ENCODE measurements at regions of chr13 and their contacts with region 1.

Region 1: DNA sequence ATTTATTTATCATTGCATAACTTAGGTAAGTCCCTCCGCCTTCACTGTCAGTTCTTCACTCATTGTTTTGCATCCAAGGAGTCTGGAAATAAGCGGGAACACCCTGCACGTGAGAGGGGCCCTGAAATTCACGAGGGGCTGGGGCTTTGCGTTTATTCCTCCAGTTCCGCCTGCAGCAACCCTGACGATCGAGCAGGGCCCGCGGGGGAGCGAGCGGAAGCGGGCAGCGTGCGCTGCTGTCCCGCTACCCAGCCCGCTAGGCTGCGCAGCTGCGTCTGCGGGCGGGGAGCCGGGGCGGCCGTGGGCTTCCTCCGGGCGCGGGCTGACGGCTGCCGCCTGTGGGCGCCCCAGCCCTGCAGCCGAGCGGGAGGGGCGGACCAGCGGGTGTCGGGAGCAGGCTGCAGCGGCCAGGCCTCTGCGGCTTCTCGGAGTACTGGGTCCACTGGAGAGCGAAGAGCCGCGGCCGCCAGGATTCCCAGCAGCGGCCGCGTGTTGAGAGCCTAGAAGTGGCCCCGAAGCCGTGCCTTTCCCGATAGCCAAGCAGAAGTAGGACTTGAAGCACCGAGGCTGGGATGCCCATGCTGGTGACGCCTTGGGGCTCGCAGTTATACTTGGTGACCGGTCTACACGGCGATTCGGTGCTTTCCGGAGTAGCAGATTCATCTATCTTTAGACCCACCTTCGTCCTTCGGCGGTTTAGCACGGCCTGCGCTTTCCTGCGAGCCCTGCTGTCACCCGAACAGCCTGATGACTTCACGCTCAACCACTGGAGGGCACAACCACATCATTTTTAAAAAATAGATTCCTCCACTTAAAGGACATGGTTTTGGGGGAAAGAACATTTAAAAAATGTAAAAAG is 32.9 kb upstream of the SACS start:
- DNase-seq: peak; percentile 62
- H3K4me3 Mint-ChIP-seq: peak overlapping the region; percentile 65
- H3K27ac Mint-ChIP-seq: peak overlapping the region; percentile 6
- H3K4me1 Mint-ChIP-seq: peaks cover 26% of the 10 kb centered on the region
- H3K27me3 Mint-ChIP-seq: no peaks in the 10 kb centered on the region
- CTCF ChIP-seq: no peak

Region 2: DNA sequence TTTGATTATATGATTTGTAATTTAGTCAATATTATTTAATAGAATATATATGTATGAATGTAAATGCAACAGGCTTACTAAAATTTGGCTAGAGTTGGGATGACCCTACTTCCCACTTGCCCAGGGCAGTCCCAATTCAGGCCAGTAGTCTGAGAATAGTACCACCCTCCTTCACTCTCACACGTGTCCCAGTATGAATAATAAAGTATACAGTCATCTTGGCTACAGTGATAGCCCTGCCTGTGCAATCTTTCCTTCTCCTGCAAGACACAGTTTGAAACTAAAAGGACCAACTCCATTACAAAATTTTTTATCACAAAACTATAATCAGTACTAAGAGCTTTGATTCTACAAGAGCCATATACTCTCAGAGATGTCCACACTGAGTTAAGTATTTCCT is 109.0 kb before region 1 on chr13:
- CTCF ChIA-PET with region 1: no interaction called
- intact Hi-C with region 1: no loop called
- DNase-seq: no peak
- H3K4me3 Mint-ChIP-seq: no peak overlapping the region
- H3K27ac Mint-ChIP-seq: no peak overlapping the region
- H3K4me1 Mint-ChIP-seq: no peaks in the 10 kb centered on the region
- H3K27me3 Mint-ChIP-seq: no peaks in the 10 kb centered on the region
- CTCF ChIP-seq: no peak

Region 3: GRCh38 chr13:23558675-23559536 is 92.5 kb after region 1 on chr13:
- CTCF ChIA-PET with region 1: no interaction called
- intact Hi-C with region 1: loop called (anchors 2 kb)
- DNase-seq: peak; percentile 58
- H3K4me3 Mint-ChIP-seq: no peak overlapping the region
- H3K27ac Mint-ChIP-seq: no peak overlapping the region
- H3K4me1 Mint-ChIP-seq: peaks cover 5% of the 10 kb centered on the region
- H3K27me3 Mint-ChIP-seq: no peaks in the 10 kb centered on the region
- CTCF ChIP-seq: no peak

Region 4: GRCh38 chr13:23567906-23568460 is 101.6 kb after region 1 on chr13:
- CTCF ChIA-PET with region 1: interaction called, 6 read pairs
- intact Hi-C with region 1: loop called (anchors 2 kb)
- DNase-seq: peak; percentile 14
- H3K4me3 Mint-ChIP-seq: no peak overlapping the region
- H3K27ac Mint-ChIP-seq: no peak overlapping the region
- H3K4me1 Mint-ChIP-seq: no peaks in the 10 kb centered on the region
- H3K27me3 Mint-ChIP-seq: no peaks in the 10 kb centered on the region
- CTCF ChIP-seq: no peak

Region 5: GRCh38 chr13:23707674-23708073 is 241.3 kb after region 1 on chr13:
- CTCF ChIA-PET with region 1: no interaction called
- intact Hi-C with region 1: loop called (anchors 10 kb)
- DNase-seq: peak; percentile 13
- H3K4me3 Mint-ChIP-seq: no peak overlapping the region
- H3K27ac Mint-ChIP-seq: no peak overlapping the region
- H3K4me1 Mint-ChIP-seq: no peaks in the 10 kb centered on the region
- H3K27me3 Mint-ChIP-seq: no peaks in the 10 kb centered on the region
- CTCF ChIP-seq: no peak

Region 6: DNA sequence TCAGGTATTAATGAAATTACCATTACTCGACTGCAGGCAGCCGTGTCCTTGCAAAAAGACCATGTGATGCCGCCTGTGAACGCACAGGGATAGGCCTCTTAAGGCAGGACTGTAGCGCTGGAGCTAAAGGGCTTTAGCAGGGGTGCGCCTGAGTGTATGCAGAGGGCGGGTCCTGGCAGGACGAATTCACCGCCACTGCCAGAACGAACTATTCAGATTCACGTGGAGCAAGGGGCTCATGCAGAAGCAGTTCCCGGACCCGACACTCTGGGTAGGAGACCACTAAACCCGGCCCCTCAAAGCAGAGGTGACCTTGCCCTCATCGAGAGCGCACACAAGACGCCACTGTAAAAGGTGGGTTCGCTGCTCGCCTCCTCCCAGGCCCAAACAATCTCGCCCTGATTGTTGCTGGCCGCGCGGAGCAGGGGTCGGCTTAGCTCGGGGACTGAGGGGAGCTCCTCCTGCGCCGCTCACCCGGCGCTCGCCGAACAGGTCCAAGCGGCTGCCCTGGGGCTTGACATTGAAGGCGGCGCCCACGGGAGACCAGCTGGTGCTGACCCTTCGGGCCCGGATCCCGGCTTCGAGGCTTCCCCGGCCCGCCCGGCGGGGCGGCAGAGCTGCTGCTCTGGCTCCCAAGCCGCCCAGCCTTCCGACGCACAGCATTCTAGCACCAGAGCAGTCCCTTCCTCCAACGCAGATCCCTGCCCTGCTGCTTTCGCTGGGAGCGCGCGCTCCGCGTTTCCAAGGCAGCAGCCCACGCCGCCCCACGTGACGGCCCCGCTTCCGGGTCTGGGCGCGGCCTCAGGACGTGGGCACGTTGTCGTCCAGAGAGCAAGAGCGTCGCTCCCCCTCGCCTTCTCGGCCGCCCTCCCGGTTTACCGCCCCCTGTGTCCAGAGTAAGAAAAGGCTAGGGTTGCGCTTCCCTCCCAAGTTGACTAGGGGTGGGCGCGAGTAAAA is 422.6 kb after region 1 on chr13 and contains the start of gene MIPEP:
- CTCF ChIA-PET with region 1: interaction called, 4 read pairs
- intact Hi-C with region 1: loop called (anchors 5 kb)
- DNase-seq: peak; percentile 90
- H3K4me3 Mint-ChIP-seq: peak within 1 kb of the TSS; percentile 88
- H3K27ac Mint-ChIP-seq: peak within 1 kb of the TSS; percentile 84
- H3K4me1 Mint-ChIP-seq: peaks cover 9% of the 10 kb centered on the region
- H3K27me3 Mint-ChIP-seq: no peaks in the 10 kb centered on the region
- CTCF ChIP-seq: peak; percentile 43
- total RNA-seq, gene MIPEP: 24.6 and 25.2 TPM in 2 replicates

Region 7: DNA sequence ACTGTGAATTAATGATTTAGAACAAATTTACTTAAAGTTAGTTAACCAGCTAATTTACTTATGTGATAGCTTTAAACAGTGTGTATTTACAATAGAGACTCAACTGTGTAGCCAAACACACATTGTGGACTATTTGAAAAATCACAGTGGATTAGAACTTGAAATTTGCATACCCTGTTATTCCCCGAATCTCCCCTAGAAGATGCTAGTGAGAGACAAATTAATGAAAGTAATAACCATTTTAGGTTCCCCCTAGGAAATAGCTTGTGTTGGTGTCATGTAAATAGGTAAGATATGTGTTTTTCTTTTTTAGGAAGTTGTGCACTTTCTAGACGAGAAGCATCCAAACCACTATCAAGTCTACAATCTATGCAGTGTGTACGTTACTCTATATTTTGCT is 941.5 kb after region 1 on chr13:
- CTCF ChIA-PET with region 1: no interaction called
- intact Hi-C with region 1: no loop called
- DNase-seq: no peak
- H3K4me3 Mint-ChIP-seq: no peak overlapping the region
- H3K27ac Mint-ChIP-seq: no peak overlapping the region
- H3K4me1 Mint-ChIP-seq: no peaks in the 10 kb centered on the region
- H3K27me3 Mint-ChIP-seq: no peaks in the 10 kb centered on the region
- CTCF ChIP-seq: no peak